G401 (cell line): ENCODE measurements at regions of chr3 and their contacts with region 1.

Region 1: DNA sequence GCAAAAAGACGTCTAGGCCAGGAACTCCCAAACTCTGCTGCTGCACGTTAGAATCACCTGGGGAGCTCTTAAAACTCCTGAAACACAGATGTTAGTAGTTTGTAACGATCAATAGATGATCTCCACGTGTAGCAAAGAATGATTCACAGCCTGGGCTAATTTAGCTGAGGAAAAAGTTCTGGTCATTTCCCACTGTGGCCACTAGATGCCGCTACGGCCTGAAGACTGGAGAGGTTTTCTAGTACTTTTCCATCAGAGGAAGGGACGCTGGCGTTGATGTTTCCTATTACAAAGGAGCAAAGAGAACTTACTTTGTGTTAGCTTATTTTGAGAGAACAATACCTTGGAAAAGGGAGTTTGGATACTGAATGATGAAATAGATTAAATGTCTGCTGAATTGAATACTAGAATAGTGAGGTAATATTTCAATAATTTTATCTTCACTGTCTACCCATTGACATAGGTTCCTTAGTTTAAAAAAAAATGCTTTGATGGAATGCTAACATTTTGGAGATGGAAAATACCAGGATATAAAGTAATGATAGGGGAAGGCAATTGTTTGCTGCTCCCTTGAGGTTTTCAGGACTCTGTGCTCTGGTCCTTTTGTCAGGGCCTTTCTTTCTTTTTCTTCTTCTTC is 159.1 kb downstream of the P3H2 start:
- DNase-seq: peak; percentile 68

Region 2: GRCh38 chr3:189630767-189631372 is 330.8 kb before region 1 on chr3:
- in situ Hi-C with region 1: no loop called
- DNase-seq: no peak

Region 3: GRCh38 chr3:189773041-189773451 is 188.6 kb before region 1 on chr3:
- in situ Hi-C with region 1: no loop called
- DNase-seq: no peak

Region 4: GRCh38 chr3:189862390-189863023 is 99.1 kb before region 1 on chr3:
- in situ Hi-C with region 1: no loop called
- DNase-seq: no peak

Region 5: DNA sequence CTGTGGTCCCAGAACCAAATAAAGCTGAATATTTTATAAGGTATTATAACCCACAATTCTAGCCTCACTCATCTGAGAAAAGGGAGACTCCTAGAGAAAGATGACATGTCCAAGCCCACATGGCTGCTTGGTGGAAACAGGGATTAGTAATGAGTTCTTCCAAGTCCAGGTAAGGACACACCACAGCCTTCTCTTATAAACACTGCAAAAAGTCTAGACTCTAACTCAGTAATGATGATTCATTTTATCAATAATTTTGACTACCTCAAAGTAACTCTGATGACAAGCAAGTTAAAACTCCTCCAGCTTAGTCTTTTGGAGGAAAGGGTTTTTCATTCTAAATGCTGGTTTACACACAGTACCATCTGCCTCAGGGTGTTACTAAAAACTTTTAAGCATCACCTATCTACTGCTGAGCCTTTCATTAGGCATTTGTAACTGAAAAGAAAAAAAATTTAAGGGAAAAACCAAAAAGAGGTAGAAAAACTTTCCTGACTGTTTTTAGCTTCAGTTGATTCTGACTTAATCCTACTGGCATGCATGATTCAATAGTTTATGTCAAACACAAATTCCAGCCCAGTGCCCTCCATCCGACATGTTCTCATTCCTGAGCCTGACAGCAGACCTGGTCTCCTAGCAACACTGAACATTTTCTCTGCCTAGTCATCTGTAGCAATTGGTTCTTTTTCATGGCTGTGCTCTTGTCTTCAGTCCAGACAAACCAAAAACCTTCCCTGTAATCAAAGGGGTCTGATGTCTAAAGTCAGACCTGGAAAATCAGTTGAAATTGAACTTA is 115.2 kb after region 1 on chr3:
- in situ Hi-C with region 1: loop called (anchors 25 kb)
- DNase-seq: no peak